ENCODE measurements at regions of chr6 and their contacts with region 1.

Region 1: DNA sequence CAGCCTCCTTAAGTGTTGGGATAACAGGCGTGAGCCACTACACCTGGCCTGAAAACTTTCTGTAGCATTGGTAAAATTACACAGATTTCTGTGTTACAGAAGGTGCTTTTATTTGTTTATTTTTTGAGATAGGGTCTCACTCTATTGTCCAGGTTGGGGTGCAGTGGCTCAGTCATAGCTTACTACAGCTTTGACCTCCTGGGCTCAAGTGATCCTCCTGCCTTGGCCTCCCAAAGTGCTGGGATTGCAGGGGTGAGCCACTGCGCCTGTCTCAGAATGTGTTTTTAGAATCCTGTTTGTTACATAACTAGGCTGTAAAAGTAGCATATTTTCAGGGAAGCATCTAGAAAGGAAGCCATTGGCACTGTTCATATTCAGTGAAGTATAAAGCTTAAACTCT is 16.9 kb upstream of the BLTP3A start:
- DNase-seq: no peak
- H3K4me3 ChIP-seq: no peak overlapping the region
- H3K27ac ChIP-seq: no peak overlapping the region
- H3K4me1 ChIP-seq: no peaks in the 10 kb centered on the region
- H3K27me3 ChIP-seq: no peaks in the 10 kb centered on the region
- CTCF ChIP-seq: no peak

Region 2: GRCh38 chr6:33746036-33746600 is 1028.8 kb before region 1 on chr6:
- CTCF ChIA-PET with region 1: no interaction called
- dilution Hi-C with region 1: no loop called
- in situ Hi-C with region 1: no loop called
- intact Hi-C with region 1: no loop called
- DNase-seq: peak; percentile 20
- H3K4me3 ChIP-seq: no peak overlapping the region
- H3K27ac ChIP-seq: no peak overlapping the region
- H3K4me1 ChIP-seq: peaks cover 40% of the 10 kb centered on the region
- H3K27me3 ChIP-seq: no peaks in the 10 kb centered on the region
- CTCF ChIP-seq: no peak

Region 3: DNA sequence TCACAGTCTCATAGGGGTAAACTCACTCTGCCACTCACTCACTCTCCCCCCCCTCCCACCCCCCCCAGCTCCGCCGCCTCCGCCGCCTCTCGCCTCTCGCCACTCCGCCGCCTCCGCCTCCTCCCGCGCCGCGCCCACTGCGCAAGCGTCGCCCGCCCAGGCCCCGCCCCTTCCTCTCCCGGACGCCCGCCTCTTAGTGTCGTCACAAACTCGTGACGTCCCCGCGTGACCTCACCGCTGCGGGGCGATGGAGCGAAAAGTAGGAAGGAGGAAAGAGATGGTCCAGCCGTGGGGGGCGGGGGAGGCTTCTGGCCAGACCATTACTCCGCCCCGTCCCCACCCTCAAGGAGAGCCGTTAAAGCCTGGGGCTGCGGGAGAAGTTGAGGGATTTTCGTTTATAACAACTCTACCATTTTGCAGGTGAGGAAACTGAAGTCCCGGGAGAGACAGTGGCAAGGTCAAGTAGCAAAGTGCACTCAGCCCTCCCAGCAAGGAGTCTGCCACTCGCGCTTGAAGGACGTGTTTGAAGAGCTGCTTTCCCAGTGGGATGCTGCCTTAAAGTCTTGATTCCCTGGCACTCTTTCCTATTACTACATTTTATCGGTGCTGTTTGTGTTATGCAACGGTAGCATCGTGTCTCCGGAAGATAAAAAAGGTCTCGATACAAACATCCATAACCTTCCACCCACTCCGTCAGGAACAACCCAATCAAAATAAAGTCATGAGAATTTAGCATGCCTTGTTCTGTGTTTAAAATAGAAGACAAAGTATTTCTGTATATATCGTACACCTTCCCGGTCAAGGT is 78.0 kb before region 1 on chr6 and contains the start of gene ILRUN:
- CTCF ChIA-PET with region 1: no interaction called
- dilution Hi-C with region 1: loop called (anchors 5 kb)
- in situ Hi-C with region 1: no loop called
- intact Hi-C with region 1: no loop called
- DNase-seq: peak; percentile 93
- H3K4me3 ChIP-seq: peak within 1 kb of the TSS; percentile 87 to 97 (median 91)
- H3K27ac ChIP-seq: peak within 1 kb of the TSS; percentile 80
- H3K4me1 ChIP-seq: peaks cover 17% of the 10 kb centered on the region
- H3K27me3 ChIP-seq: no peaks in the 10 kb centered on the region
- CTCF ChIP-seq: no peak
- total RNA-seq, gene ILRUN: 40.0 to 67.3 TPM